Activated CD8-positive, alpha-beta T cell treated with anti-CD3 and anti-CD28 coated beads for 36 hours (primary cell): ENCODE measurements at regions of chr5 and their contacts with region 1.

Region 1: DNA sequence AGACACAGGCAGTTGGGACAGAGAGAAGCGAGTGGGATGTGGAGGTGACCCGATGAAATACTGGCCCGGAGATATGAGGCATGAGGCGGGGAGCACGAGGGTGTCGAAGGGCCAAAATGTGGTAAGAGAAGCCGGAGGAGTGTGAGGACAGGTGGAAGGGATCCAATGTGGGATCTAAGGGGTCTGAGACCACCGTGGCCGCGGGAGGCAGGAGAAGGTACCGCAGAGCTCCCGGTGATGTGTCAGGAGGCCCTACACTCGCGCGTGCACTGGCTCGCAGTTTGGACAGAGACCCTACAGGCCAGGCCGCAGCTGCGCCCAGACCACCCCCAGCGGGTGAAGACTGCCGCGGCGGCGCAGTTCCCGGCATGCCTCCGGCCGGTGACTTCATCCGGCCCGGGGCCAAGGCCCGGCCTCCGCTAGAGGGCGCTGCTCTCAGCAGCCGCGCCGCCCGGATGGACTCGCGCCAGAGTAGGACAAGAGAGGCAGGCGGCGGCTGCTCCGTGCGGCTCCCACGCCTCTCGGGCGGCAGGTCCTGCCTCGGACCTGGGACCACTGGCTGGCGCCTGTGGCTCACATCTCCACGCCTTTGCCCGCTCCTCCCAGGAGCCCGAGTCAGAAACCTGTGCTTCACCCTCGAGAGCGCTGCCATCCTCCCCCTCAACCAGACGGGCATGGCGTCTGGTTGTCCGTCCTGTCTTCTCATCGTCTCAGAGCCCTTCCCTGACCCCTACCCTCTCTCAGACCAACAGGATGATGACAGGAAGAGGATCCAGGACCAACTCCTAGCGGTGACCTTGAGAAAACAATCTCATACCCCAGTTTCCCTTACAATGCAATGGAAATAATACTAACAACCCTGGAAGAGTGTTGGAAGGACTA is 35.4 kb upstream of the STING1 start:
- DNase-seq: peak; percentile 91
- ATAC-seq: peak; percentile 92
- H3K4me3 Mint-ChIP-seq: peak overlapping the region; percentile 74
- H3K27ac Mint-ChIP-seq: peak overlapping the region; percentile 90
- H3K4me1 Mint-ChIP-seq: peaks cover 19% of the 10 kb centered on the region
- H3K27me3 Mint-ChIP-seq: peaks cover 1% of the 10 kb centered on the region
- CTCF ChIP-seq: peak; percentile 98

Region 2: DNA sequence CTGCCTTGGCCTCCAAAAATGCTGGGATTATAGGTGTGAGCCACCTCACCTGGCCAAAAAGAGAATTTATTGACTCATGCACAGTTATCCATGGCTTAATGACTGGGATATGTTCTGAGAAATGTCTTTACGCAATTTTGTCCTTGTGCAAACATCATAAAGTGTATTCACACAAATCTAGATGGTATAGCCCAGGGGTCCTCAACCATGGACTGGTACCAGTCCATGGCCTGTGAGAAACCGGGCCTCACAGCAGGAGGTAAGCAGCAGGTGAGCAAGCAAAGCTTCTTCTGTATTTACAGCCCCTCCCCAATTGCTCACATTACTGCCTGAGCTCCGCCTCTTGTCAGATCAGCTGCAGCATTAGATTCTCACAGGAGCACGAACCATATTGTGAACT is 307.3 kb before region 1 on chr5:
- CTCF ChIA-PET with region 1: no interaction called
- POLR2A ChIA-PET with region 1: no interaction called
- intact Hi-C with region 1: no loop called
- DNase-seq: no peak
- ATAC-seq: no peak
- H3K4me3 Mint-ChIP-seq: no peak overlapping the region
- H3K27ac Mint-ChIP-seq: no peak overlapping the region
- H3K4me1 Mint-ChIP-seq: no peaks in the 10 kb centered on the region
- H3K27me3 Mint-ChIP-seq: no peaks in the 10 kb centered on the region
- CTCF ChIP-seq: no peak

Region 3: DNA sequence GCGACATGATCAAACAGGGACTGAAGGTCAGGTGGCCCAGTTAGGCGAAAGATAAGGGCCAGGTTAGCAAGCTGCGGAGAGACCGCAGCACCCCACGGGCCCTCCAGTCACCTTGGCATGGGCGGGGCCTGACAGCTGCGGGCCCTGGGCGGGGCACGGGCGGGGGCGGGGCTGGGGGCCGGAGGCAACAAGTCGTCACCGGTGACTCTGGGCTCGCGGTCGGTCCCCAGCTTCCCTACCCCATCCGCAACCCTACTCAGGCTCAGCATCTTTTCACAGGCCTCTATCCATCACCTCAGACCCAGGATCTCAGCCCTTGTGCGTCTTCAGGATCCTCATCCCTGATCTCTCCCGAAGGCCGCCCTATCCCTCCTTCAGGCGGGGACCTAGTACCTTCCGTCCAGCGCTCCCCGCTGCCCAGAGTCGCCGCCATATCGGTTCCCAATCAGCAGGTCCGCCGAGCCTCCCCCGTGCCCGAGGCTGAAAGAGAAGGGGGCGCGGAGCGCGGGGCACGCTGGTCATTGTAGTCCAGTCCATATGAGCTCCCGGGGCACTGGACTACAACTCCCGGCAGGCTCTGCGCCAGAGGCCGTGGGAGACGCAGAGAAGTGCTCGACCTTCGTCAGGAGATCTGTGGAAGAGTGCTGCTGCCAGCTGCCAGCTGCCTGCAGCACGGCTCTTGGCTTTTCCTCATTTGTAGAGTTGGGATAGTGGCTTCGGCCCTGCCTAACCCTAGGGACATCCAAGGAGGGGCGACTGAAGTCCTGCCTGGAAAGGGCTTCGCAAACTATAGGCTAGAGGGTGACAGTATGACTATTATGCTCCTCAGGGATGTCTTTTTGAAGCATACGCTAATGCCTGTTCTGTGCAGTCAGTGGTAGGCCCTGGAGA is 78.7 kb before region 1 on chr5 and contains the start of gene DNAJC18:
- CTCF ChIA-PET with region 1: interaction called, 13 read pairs
- POLR2A ChIA-PET with region 1: interaction called, 3 read pairs
- intact Hi-C with region 1: no loop called
- DNase-seq: peak; percentile 98
- ATAC-seq: peak; percentile 91
- H3K4me3 Mint-ChIP-seq: peak within 1 kb of the TSS; percentile 91
- H3K27ac Mint-ChIP-seq: peak within 1 kb of the TSS; percentile 96
- H3K4me1 Mint-ChIP-seq: peaks cover 42% of the 10 kb centered on the region
- H3K27me3 Mint-ChIP-seq: no peaks in the 10 kb centered on the region
- CTCF ChIP-seq: no peak
- total RNA-seq, gene DNAJC18: 24.9 to 27.5 TPM

Region 4: DNA sequence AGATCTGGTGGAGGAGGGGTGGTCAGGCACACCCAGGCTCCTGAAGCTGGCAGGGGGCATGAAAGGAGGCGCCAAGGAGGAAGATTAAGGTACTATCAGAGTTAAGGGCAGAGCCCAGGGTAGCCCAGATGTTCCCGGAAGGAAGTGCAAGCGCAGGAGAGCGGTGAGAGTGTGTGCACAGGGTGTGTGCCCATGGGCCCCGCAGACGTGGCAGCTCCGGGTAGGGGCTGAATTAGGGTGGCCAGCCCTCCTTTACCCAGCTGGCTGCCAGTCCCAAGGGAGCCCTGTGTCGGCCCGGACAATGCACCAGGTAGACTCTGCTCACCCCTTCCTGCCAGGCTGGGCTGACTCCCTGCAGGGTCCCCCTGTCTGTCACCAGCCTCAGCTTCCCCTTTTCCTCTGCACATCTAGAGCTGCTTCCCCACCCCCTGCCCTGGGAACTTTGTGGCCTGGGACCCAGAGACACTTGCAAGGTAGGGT is 47.1 kb before region 1 on chr5 and contains the start of gene SMIM33:
- CTCF ChIA-PET with region 1: interaction called, 12 read pairs
- POLR2A ChIA-PET with region 1: no interaction called
- intact Hi-C with region 1: no loop called
- DNase-seq: peak; percentile 39
- ATAC-seq: peak; percentile 64
- H3K4me3 Mint-ChIP-seq: peak within 1 kb of the TSS; percentile 69
- H3K27ac Mint-ChIP-seq: peak within 1 kb of the TSS; percentile 93
- H3K4me1 Mint-ChIP-seq: peaks cover 64% of the 10 kb centered on the region
- H3K27me3 Mint-ChIP-seq: no peaks in the 10 kb centered on the region
- CTCF ChIP-seq: no peak
- total RNA-seq, gene SMIM33: 0.16 TPM in 1 of 2 experiments, not detected in the other

Region 5: GRCh38 chr5:139495638-139496435 is 22.1 kb before region 1 on chr5:
- CTCF ChIA-PET with region 1: interaction called, 18 read pairs
- POLR2A ChIA-PET with region 1: interaction called, 3 read pairs
- intact Hi-C with region 1: no loop called
- DNase-seq: no peak
- ATAC-seq: peak; percentile 64
- H3K4me3 Mint-ChIP-seq: no peak overlapping the region
- H3K27ac Mint-ChIP-seq: peak overlapping the region; percentile 12
- H3K4me1 Mint-ChIP-seq: peaks cover 17% of the 10 kb centered on the region
- H3K27me3 Mint-ChIP-seq: no peaks in the 10 kb centered on the region
- CTCF ChIP-seq: no peak